Cardiac septum (tissue), 1 donor: ENCODE measurements at regions of chr1 and their contacts with region 1.

Region 1: GRCh38 chr1:167099851-167100250 is 6.0 kb downstream of the STYXL2 start:
- DNase-seq: no peak

Region 2: GRCh38 chr1:167117225-167117624 is 17.4 kb after region 1 on chr1:
- intact Hi-C with region 1: loop called (anchors 1 kb)
- DNase-seq: no peak

Region 3: DNA sequence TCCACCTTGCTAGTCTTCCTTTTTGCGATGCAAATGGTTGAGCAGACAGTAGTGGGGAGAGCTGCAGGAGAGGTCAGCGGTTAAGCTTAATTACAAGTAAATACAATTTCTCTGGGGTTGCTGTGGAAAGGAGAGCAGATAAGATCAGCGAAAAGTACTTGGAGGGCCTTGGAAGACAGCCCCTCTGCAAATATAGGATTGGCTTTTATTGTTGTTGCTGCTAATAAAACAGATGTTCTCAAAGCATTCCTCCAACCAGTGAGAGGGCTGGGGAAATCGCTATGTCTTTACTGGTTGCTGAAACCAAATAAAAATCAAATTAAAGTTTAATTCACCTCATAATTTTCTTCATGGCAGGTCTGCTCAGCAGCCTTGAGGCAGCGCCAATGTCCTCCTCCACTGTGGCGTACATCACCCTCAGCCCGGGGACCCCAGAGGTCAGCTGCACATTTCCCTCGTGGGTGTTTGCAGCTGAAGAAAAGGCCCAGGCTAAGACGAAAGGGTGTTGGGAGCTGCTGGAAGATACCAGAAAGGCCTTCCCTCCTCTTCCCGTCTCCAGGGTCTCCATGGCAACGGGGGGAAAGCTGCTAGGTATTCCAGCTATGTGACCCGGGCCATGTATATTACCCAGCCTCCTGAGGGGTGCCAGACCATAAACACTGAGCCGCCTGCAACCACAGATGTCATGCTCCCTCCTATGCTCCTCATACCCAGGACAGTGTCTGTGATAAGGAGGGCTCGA is 66.3 kb after region 1 on chr1:
- intact Hi-C with region 1: no loop called
- DNase-seq: no peak